CD4-positive, alpha-beta memory T cell (primary cell): ENCODE measurements at regions of chr5 and their contacts with region 1.

Region 1: DNA sequence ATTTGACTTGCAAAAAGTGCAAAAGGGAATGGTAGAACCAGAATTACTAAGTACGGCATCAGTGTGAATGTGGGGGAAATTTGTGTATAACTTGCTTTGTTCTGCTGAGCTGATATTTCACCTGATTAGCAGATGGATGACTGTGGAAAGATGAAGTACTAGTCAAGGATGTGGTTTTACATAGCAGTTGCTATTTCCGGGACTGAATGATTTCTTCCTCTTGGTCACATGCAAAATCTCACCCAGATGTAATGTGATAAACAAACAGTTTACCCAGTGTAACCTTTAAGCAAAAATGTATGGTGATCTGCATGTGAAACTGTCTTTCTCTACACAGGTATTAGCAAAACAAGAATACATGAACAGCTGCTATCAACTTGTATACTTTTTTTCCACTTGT is 46.1 kb downstream of the DCP2 start:
- DNase-seq: peak; percentile 69 to 83 (median 78)
- H3K4me3 ChIP-seq: peak overlapping the region in 1 of 2 donors; percentile 12
- H3K4me3 Mint-ChIP-seq: peak overlapping the region; percentile 41 to 71 (median 61)
- H3K27ac ChIP-seq: peak overlapping the region; percentile 43
- H3K27ac Mint-ChIP-seq: peak overlapping the region; percentile 62 to 94 (median 91)
- H3K4me1 ChIP-seq: peaks cover 67% of the 10 kb centered on the region
- H3K4me1 Mint-ChIP-seq: peaks cover 53 to 86% (median 71%) of the 10 kb centered on the region in 4 donors
- H3K27me3 ChIP-seq: no peaks in the 10 kb centered on the region
- H3K27me3 Mint-ChIP-seq: no peaks in the 10 kb centered on the region

Region 2: GRCh38 chr5:112976432-112977309 is 46.0 kb before region 1 on chr5 and contains the start of gene DCP2:
- CTCF ChIA-PET with region 1: interaction called, 3 read pairs
- POLR2A ChIA-PET with region 1: interaction called, 31 read pairs
- intact Hi-C with region 1: loop called (anchors 1 kb)
- DNase-seq: peak; percentile 95 to 97 (median 97)
- H3K4me3 ChIP-seq: peak within 1 kb of the TSS; percentile 77 to 79
- H3K4me3 Mint-ChIP-seq: peak within 1 kb of the TSS; percentile 96 to 100 (median 99)
- H3K27ac ChIP-seq: peak within 1 kb of the TSS; percentile 85
- H3K27ac Mint-ChIP-seq: peak within 1 kb of the TSS; percentile 94 to 98 (median 97)
- H3K4me1 ChIP-seq: peaks cover 45% of the 10 kb centered on the region
- H3K4me1 Mint-ChIP-seq: peaks cover 31 to 63% (median 43%) of the 10 kb centered on the region in 4 donors
- H3K27me3 ChIP-seq: no peaks in the 10 kb centered on the region
- H3K27me3 Mint-ChIP-seq: peaks cover 0 to 4% of the 10 kb centered on the region in 2 donors
- total RNA-seq, gene DCP2: 116 to 123 TPM

Region 3: DNA sequence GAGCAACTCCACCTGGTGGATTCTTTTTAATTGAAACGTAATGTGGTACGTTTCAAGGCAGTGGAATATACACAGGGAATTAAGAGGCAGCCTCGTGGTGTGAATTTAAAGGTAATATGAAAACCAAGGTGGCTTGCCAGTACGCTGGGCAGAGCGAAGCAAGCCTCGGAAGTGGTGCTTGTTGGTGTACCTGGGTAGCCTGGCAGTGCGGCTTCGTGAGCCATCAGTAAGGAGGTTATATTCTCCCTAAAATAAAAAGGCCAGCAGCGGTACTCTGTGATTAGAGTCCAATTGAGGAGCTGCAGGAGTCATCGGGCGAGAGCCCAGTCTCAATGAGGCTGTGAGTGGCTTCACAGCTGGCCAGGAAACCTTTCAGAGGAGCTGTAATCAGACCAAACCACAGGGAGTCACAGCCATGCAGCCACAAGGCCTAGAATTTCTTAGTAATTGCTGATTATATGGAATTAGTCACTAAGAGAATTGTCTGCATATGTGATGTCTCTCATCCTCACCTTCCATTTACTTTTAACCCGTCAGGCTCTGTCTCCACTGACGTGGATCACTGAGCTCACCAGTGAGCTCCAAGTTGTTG is 11.6 kb after region 1 on chr5:
- CTCF ChIA-PET with region 1: interaction called, 4 read pairs
- POLR2A ChIA-PET with region 1: interaction called, 18 read pairs
- intact Hi-C with region 1: no loop called
- DNase-seq: no peak
- H3K4me3 ChIP-seq: no peak overlapping the region
- H3K4me3 Mint-ChIP-seq: no peak overlapping the region
- H3K27ac ChIP-seq: no peak overlapping the region
- H3K27ac Mint-ChIP-seq: peak overlapping the region in 2 of 7 donors; percentile 60 to 67
- H3K4me1 ChIP-seq: no peaks in the 10 kb centered on the region
- H3K4me1 Mint-ChIP-seq: peaks cover 8 to 26% (median 19%) of the 10 kb centered on the region in 4 donors
- H3K27me3 ChIP-seq: no peaks in the 10 kb centered on the region
- H3K27me3 Mint-ChIP-seq: no peaks in the 10 kb centered on the region

Region 4: GRCh38 chr5:113075019-113075418 is 52.4 kb after region 1 on chr5:
- CTCF ChIA-PET with region 1: interaction called, 3 read pairs
- POLR2A ChIA-PET with region 1: interaction called, 5 read pairs
- intact Hi-C with region 1: loop called (anchors 10 kb)
- DNase-seq: no peak
- H3K4me3 ChIP-seq: no peak overlapping the region
- H3K4me3 Mint-ChIP-seq: no peak overlapping the region
- H3K27ac ChIP-seq: no peak overlapping the region
- H3K27ac Mint-ChIP-seq: no peak overlapping the region
- H3K4me1 ChIP-seq: no peaks in the 10 kb centered on the region
- H3K4me1 Mint-ChIP-seq: peaks cover 7 to 32% (median 20%) of the 10 kb centered on the region in 4 donors
- H3K27me3 ChIP-seq: no peaks in the 10 kb centered on the region
- H3K27me3 Mint-ChIP-seq: no peaks in the 10 kb centered on the region

Region 5: GRCh38 chr5:113153512-113154097 is 130.9 kb after region 1 on chr5:
- CTCF ChIA-PET with region 1: no interaction called
- POLR2A ChIA-PET with region 1: no interaction called
- intact Hi-C with region 1: no loop called
- DNase-seq: no peak
- H3K4me3 ChIP-seq: no peak overlapping the region
- H3K4me3 Mint-ChIP-seq: no peak overlapping the region
- H3K27ac ChIP-seq: no peak overlapping the region
- H3K27ac Mint-ChIP-seq: no peak overlapping the region
- H3K4me1 ChIP-seq: no peaks in the 10 kb centered on the region
- H3K4me1 Mint-ChIP-seq: no peaks in the 10 kb centered on the region
- H3K27me3 ChIP-seq: no peaks in the 10 kb centered on the region
- H3K27me3 Mint-ChIP-seq: no peaks in the 10 kb centered on the region

Region 6: GRCh38 chr5:113294311-113295110 is 271.9 kb after region 1 on chr5:
- CTCF ChIA-PET with region 1: interaction called, 4 read pairs
- POLR2A ChIA-PET with region 1: interaction called, 11 read pairs
- intact Hi-C with region 1: loop called (anchors 1 kb)
- DNase-seq: peak; percentile 69 to 82 (median 71)
- H3K4me3 ChIP-seq: peak overlapping the region; percentile 67 to 77
- H3K4me3 Mint-ChIP-seq: peak overlapping the region; percentile 89 to 97 (median 96)
- H3K27ac ChIP-seq: peak overlapping the region; percentile 26
- H3K27ac Mint-ChIP-seq: peak overlapping the region; percentile 56 to 92 (median 89)
- H3K4me1 ChIP-seq: peaks cover 22% of the 10 kb centered on the region
- H3K4me1 Mint-ChIP-seq: peaks cover 13 to 32% (median 23%) of the 10 kb centered on the region in 4 donors
- H3K27me3 ChIP-seq: peaks cover 12% of the 10 kb centered on the region
- H3K27me3 Mint-ChIP-seq: peaks cover 7 to 14% of the 10 kb centered on the region in 2 donors